Motor neuron (in vitro differentiated cells): ENCODE measurements at regions of chr5 and their contacts with region 1.

Region 1: DNA sequence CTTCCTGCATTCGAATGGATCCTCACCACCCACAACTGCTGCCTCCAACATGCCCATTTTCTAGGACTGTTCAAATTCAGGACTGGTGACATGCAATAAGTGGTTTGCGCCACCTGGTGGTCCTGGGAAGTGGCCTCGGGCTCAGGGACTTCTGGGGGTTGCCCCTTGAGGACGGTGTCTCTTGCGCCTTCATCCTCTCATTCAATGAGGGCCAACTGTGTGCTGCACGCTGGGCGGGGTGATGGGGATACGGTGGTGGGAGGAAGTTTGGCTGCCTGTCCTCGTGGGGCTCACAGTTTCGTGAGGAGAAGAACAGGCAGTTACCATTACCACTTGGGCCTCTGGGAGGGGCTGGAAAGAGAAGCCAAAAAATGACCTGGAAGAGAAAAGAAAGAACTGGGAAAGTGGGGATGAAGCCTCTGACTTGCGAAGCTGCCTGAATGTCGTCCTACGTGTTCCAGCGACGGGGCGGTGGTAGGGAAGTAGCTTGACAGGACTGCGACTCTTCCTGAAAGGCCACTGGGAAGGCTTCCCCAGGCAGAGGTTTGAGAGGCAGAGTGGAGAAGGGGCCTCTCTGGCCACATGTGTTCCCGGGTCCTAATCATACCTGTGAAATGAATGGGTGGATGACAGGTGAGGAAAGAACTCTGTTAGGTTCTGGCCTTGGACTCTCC is 49.0 kb downstream of the PSD2 start:
- ATAC-seq: peak in 4 of 8 experiments; percentile 8 to 67 (median 53)
- H3K4me3 ChIP-seq: no peak overlapping the region
- H3K27ac ChIP-seq: no peak overlapping the region
- H3K4me1 ChIP-seq: no peaks in the 10 kb centered on the region

Region 2: GRCh38 chr5:139795074-139796001 is 49.3 kb before region 1 on chr5 and contains the start of gene PSD2:
- in situ Hi-C with region 1: loop called in 1 of 9 experiments (anchors 10 kb)
- ATAC-seq: peak; percentile 68 to 86 (median 79)
- H3K4me3 ChIP-seq: peak within 1 kb of the TSS; percentile 42 to 75 (median 54)
- H3K27ac ChIP-seq: peak within 1 kb of the TSS in 1 of 2 donors; percentile 12
- H3K4me1 ChIP-seq: peaks cover 8 to 12% of the 10 kb centered on the region in 2 donors
- total RNA-seq, gene PSD2: 0.17 to 12.5 (median 9.6) TPM in 6 of 8 experiments, not detected in the others

Region 3: GRCh38 chr5:140054086-140054689 is 209.6 kb after region 1 on chr5:
- in situ Hi-C with region 1: no loop called
- ATAC-seq: no peak
- H3K4me3 ChIP-seq: no peak overlapping the region
- H3K27ac ChIP-seq: no peak overlapping the region
- H3K4me1 ChIP-seq: no peaks in the 10 kb centered on the region